Activated B cell treated with CpG ODN at 0.5 μM for 24 hours (primary cell): ENCODE measurements at regions of chr5 and their contacts with region 1.

Region 1: DNA sequence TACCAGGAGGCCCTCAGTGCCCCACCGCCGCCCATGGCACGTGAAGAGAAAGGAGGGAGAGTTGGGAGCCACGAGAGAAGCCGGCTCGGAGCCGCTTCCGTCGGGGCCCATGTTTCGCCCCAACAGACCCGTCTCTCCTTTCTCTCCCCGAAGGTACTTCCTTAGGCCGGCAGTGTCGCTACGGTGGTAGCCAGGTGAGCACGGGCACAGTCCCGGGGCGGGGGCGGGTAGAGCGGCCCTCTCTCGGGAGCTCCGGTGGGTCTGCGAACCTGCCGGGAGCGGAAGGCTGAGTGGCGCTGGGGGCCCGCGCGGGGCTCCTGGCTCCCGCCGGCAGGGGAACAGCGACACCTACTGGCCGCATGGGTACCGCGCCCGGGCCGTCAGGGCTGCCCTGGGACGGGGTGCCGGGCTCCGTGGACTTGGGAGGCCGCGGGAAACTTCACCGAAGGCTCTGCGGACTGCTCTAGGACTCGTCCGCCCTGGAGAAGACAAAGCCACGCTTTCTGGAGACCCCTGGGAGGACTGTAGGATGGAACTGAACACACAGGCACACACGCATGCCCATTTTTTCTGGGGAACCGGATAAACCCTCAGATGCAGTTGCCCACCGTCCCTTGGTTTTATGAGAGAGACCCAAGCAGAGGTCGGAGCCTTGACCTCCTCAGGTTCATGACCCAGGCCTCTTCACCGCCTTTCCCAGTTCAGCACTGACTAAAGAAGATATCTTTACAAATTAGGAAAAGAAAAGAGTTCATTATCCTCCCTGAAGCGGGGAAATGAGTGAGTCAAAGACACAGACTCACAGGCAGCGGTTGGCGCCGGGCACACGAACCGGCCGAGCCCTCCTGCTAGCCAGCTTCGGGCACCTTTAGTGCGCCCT is 202.5 kb downstream of the MEF2C start:
- DNase-seq: peak; percentile 74
- ATAC-seq: peak; percentile 74
- H3K4me3 Mint-ChIP-seq: peak overlapping the region; percentile 24
- H3K27ac Mint-ChIP-seq: no peak overlapping the region
- H3K4me1 Mint-ChIP-seq: peaks cover 12% of the 10 kb centered on the region
- H3K27me3 Mint-ChIP-seq: peaks cover 61% of the 10 kb centered on the region
- CTCF ChIP-seq: no peak

Region 2: GRCh38 chr5:87780831-87781760 is 899.4 kb before region 1 on chr5:
- CTCF ChIA-PET with region 1: interaction called, 13 read pairs
- POLR2A ChIA-PET with region 1: no interaction called
- intact Hi-C with region 1: loop called (anchors 1 kb)
- DNase-seq: peak; percentile 49
- ATAC-seq: peak; percentile 99
- H3K4me3 Mint-ChIP-seq: no peak overlapping the region
- H3K27ac Mint-ChIP-seq: no peak overlapping the region
- H3K4me1 Mint-ChIP-seq: peaks cover 2% of the 10 kb centered on the region
- H3K27me3 Mint-ChIP-seq: peaks cover 15% of the 10 kb centered on the region
- CTCF ChIP-seq: peak; percentile 86

Region 3: DNA sequence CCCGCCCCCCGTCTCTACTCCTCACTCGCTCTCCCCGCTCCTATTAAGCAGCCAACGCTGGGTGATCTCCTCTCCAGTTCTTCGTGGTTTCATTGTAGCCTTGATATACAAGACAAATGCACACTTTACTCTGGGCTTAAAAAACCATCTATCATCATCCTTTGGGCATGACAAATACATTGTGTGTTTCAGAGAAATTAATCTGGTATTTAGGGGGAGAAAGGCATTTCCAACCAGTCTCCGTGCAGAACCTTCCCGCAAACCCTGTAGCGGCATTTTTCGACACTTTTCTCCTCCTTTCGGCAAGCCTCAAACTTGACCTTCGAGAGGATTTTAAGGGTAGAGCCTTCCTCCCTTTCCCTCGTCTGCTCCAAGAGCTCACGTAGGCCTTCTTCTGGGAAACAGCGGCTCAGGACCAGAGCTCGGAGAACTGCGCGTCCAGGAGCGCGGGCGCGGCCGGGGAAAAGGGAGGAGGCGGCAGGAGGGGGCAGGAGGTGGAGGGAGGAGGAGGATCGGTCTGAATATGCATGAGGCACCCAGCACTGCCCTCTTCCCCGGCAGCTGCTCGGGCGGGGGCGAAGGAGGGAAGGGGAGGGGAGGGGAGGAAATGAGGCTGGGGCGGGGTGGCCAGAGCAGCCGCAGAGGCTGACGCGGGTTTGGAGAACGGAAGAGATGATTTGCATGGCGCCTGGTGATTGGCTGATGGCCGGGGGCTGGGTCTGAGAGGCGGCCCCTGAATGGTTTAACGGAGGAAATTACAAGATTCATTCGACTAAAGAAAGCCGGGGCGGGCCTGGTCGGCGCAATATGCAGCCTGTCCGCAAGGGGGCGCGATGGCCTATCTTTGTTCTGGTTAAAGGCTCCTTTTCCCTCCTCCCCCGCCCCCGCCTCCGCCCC is 539.4 kb before region 1 on chr5:
- CTCF ChIA-PET with region 1: no interaction called
- POLR2A ChIA-PET with region 1: no interaction called
- intact Hi-C with region 1: loop called (anchors 5 kb)
- DNase-seq: no peak
- ATAC-seq: peak; percentile 49
- H3K4me3 Mint-ChIP-seq: no peak overlapping the region
- H3K27ac Mint-ChIP-seq: no peak overlapping the region
- H3K4me1 Mint-ChIP-seq: peaks cover 11% of the 10 kb centered on the region
- H3K27me3 Mint-ChIP-seq: peaks cover 34% of the 10 kb centered on the region
- CTCF ChIP-seq: no peak

Region 4: GRCh38 chr5:88268385-88269184 is 411.9 kb before region 1 on chr5 and contains the start of gene TMEM161B:
- CTCF ChIA-PET with region 1: no interaction called
- POLR2A ChIA-PET with region 1: interaction called, 3 read pairs
- intact Hi-C with region 1: loop called (anchors 5 kb)
- DNase-seq: peak; percentile 83
- ATAC-seq: peak; percentile 99
- H3K4me3 Mint-ChIP-seq: peak within 1 kb of the TSS; percentile 100
- H3K27ac Mint-ChIP-seq: peak within 1 kb of the TSS; percentile 96
- H3K4me1 Mint-ChIP-seq: peaks cover 48% of the 10 kb centered on the region
- H3K27me3 Mint-ChIP-seq: no peaks in the 10 kb centered on the region
- CTCF ChIP-seq: no peak
- total RNA-seq, gene TMEM161B: 26.4 and 31.1 TPM in 2 replicates

Region 5: DNA sequence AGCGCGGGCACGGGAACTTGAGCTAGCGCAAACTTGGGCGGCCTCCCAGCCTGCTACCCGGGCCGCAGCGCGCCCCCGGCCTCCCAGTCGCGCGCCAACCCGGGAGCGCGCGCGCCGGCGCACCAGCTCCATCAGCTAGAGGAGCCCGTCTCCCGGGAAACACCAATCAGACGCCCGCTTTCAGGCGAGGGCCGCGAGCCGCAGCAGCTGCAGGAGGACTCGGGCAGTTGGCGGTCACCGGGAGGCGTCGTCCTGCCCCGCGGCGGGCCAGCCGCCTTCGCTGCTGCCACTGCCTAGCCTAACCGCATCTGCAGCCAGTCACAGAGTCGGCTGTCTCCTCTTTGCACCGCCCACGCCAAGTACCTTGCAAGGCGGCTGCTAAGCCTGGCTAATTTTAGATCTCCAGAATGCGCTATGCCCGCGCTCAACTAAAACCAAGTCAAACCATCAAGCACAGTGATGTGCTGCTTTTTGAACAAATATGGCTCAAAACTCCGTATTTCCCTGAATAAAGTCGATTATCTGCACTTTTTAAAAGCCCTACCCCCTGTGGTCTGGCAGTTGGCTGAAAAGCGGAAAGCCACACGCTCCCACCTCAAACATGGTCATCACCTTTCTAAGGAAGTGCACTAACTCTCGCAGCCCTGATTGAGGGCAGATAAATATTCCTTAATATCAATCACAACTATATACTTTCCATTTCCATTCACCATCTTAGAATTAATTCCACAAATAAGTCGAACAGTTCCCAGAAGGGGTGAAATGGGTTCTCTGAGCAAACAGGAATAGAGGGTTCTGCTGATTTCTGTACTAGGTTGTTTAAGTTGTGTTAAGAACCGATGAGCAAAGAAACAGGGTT is 19.3 kb before region 1 on chr5:
- CTCF ChIA-PET with region 1: interaction called, 15 read pairs
- POLR2A ChIA-PET with region 1: interaction called, 6 read pairs
- intact Hi-C with region 1: loop called (anchors 2 kb)
- DNase-seq: no peak
- ATAC-seq: no peak
- H3K4me3 Mint-ChIP-seq: peak overlapping the region; percentile 73
- H3K27ac Mint-ChIP-seq: no peak overlapping the region
- H3K4me1 Mint-ChIP-seq: peaks cover 18% of the 10 kb centered on the region
- H3K27me3 Mint-ChIP-seq: peaks cover 62% of the 10 kb centered on the region
- CTCF ChIP-seq: no peak

Region 6: GRCh38 chr5:88666761-88667495 is 13.6 kb before region 1 on chr5:
- CTCF ChIA-PET with region 1: interaction called, 15 read pairs
- POLR2A ChIA-PET with region 1: no interaction called
- intact Hi-C with region 1: loop called (anchors 1 kb)
- DNase-seq: no peak
- ATAC-seq: peak; percentile 50
- H3K4me3 Mint-ChIP-seq: peak overlapping the region; percentile 84
- H3K27ac Mint-ChIP-seq: peak overlapping the region; percentile 16
- H3K4me1 Mint-ChIP-seq: peaks cover 23% of the 10 kb centered on the region
- H3K27me3 Mint-ChIP-seq: peaks cover 80% of the 10 kb centered on the region
- CTCF ChIP-seq: no peak